ENCODE measurements at regions of chr10 and their contacts with region 1.

Region 1: DNA sequence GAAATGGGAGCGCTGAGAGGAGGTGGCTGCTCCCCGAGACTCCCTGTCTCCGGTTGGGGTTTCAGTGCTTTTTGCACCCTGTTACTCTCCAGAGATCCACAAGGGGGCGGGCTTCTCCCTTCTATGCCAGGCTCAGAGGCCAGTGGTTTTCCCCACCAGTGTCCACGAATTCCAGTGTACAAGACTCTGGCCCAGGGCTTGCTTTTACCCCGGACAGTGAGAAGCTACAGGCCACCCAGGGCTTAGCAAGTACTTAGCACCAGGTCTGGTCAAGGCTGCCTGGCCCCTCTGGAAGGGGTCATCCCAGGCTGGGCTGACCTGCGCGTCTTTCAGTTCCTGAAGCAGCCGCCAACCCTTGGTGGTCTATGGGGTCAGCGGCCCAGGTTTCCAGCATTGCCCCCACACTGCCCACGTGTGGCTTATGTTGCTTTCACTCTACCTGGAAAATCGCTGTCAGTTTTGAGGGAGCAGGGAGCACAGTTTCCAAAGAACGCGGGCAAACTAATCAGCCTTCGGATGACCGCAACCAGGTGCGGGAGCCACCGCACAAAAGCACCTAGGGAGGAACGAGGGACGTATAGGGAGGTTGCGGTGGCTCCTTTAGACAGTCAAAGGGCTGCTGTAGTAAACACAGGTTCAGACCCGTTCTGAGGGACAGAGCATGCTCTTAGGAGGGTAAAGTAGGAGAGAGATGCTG is 6.8 kb downstream of the CYP26A1 start:
- DNase-seq: peak; percentile 42 to 61 (median 55)
- H3K4me3 ChIP-seq: peak overlapping the region in 3 of 7 experiments; percentile 15 to 57 (median 50)
- H3K27ac ChIP-seq: no peak overlapping the region
- H3K4me1 ChIP-seq: peaks cover 0 to 6% (median 4%) of the 10 kb centered on the region in 4 experiments
- H3K27me3 ChIP-seq: peaks cover 8 to 57% (median 21%) of the 10 kb centered on the region in 5 experiments

Region 2: GRCh38 chr10:93062514-93063143 is 17.9 kb before region 1 on chr10:
- CTCF ChIA-PET with region 1: interaction called, 76 read pairs
- POLR2A ChIA-PET with region 1: no interaction called
- DNase-seq: peak; percentile 74 to 87 (median 87)
- H3K4me3 ChIP-seq: peak overlapping the region; percentile 28 to 81 (median 63)
- H3K27ac ChIP-seq: no peak overlapping the region
- H3K4me1 ChIP-seq: peaks cover 2 to 45% (median 32%) of the 10 kb centered on the region in 4 experiments
- H3K27me3 ChIP-seq: peaks cover 19 to 90% (median 48%) of the 10 kb centered on the region in 5 experiments

Region 3: DNA sequence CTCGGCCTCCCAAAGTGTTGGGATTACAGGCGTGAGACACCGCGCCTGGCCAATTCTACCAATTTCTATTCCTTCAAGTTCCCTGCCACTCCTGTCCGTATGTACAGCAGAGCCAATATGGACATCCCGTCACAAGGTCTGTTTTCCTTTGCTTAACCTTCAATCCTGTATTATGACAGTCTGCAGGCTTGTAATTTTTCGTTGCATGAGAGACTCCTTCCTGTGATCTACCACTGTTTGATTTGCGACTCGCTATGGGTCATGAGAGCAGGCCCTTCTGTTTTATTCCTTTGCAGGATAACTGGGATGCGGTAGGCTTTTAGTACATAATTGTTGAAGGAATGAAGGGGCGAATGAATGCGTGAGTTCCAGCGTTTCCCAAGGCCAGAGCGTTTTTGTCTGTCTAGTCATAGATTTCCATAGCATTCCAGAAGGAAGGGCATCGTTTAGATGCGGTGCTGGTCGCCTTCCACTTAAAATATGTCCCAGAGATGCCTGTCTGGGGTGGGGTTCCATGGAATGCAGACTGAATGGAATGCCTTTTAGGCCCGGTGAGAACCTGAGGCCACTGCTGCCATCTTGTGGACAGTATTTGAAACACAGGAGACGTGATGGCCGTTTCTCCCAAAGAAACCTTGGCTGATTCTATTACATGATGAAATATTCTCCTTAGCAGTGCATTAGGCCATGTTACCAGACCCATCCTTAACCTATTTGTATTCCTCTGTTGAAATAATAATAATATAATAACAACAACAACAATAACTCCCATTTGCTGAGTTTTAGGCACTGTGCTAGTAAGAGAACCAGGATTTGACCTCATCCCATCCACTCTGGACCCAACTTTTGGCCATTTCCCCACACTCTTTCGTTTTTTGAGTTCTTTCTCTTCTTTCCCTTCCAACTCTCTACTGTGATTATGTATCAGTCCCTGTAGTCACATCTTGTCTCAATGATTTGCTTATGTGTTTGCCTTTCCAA is 208.4 kb after region 1 on chr10:
- CTCF ChIA-PET with region 1: interaction called, 11 read pairs
- POLR2A ChIA-PET with region 1: no interaction called
- DNase-seq: peak; percentile 52 to 71 (median 61)
- H3K4me3 ChIP-seq: no peak overlapping the region
- H3K27ac ChIP-seq: no peak overlapping the region
- H3K4me1 ChIP-seq: peaks cover 0 to 11% (median 6%) of the 10 kb centered on the region in 4 experiments
- H3K27me3 ChIP-seq: no peaks in the 10 kb centered on the region

Region 4: DNA sequence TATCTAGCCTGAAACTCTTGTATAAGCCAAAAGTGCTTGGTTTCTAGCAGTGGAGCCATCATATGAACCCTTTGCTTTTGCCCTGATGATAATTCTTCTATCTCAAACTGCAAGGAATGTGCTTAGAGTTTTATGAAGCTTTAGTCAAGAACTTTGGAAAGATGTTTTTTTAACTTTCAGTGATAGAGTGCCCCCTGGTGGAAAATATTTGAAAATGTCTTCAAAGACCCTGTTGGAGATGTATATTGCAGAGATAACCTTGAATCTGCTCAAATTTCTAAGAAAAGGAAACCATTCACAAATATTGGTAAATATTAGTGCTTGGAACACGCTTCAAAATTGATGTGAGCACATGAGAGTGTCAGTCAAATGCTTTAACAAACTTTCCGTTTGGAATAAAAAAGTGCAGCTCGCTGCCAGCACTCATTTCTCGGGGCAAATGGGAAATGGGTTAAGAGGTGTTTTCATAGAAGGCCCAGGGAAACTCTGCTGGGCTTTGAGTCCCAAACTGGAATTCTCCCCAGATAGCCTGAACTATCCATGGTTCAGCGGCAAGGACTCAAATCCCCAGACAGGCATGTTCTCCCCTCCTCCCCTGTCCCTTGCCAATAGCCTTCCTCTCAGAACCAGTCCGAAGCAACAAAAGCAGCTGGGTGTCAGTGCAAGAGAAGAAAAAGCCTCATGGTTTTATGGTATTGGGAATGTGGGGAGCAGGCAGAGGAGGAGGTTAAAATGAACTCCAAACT is 272.3 kb after region 1 on chr10:
- CTCF ChIA-PET with region 1: interaction called, 111 read pairs
- POLR2A ChIA-PET with region 1: interaction called, 4 read pairs
- DNase-seq: peak; percentile 45 to 68 (median 59)
- H3K4me3 ChIP-seq: no peak overlapping the region
- H3K27ac ChIP-seq: no peak overlapping the region
- H3K4me1 ChIP-seq: no peaks in the 10 kb centered on the region
- H3K27me3 ChIP-seq: peaks cover 0 to 4% (median 0%) of the 10 kb centered on the region in 5 experiments